ENCODE measurements at regions of chr2 and their contacts with region 1.

Region 1: DNA sequence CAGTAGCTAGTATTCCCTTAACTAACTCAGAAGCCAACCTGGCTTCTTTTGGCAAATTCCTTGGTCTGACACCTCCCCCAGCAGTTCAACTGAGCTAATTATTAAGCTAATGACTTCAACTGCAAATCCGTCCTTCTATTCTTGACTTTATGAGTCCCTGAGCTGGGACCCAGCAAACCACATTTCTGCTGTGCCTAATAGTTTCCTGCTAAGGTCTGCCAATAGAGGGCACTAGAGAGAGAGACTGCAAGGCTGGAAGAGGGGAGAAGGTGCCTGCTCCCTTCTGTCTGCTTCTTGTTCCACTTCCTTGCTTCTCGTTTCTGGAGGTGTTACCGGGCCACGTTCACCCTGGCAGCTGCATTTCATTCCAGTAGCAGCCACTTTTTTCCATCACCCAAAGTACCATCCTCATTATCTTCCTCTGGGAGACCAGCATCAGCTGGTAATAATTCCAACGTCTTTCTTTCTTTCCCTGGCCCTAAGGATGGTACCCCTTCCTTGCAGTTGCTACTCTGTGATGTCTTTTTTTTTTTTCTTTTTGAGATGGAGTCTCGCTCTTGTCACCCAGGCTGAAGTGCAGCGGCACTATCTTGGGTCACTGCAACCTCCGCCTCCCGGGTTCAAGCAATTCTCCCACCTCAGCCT is 352.0 kb downstream of the TNS1 start:
- DNase-seq: peak in 3 of 5 donors; percentile 33 to 43 (median 34)
- ATAC-seq: peak in 2 of 4 donors; percentile 73 to 84
- H3K4me3 ChIP-seq: no peak overlapping the region
- H3K27ac ChIP-seq: no peak overlapping the region
- H3K4me1 ChIP-seq: peaks cover 0 to 16% (median 0%) of the 10 kb centered on the region in 12 donors
- H3K27me3 ChIP-seq: no peaks in the 10 kb centered on the region
- CTCF ChIP-seq: peak; percentile 62 to 84 (median 72)
- POLR2A ChIP-seq: no peak

Region 2: GRCh38 chr2:217538719-217539118 is 112.1 kb before region 1 on chr2:
- intact Hi-C with region 1: loop called in 1 of 10 experiments (anchors 10 kb)
- DNase-seq: no peak
- ATAC-seq: no peak
- H3K4me3 ChIP-seq: no peak overlapping the region
- H3K27ac ChIP-seq: no peak overlapping the region
- H3K4me1 ChIP-seq: peaks cover 0 to 17% (median 0%) of the 10 kb centered on the region in 12 donors
- H3K27me3 ChIP-seq: no peaks in the 10 kb centered on the region
- CTCF ChIP-seq: no peak
- POLR2A ChIP-seq: no peak

Region 3: GRCh38 chr2:217695033-217695520 is 44.2 kb after region 1 on chr2:
- intact Hi-C with region 1: loop called in 1 of 10 experiments (anchors 2 kb)
- DNase-seq: no peak
- ATAC-seq: peak in 3 of 4 donors; percentile 29 to 76 (median 41)
- H3K4me3 ChIP-seq: no peak overlapping the region
- H3K27ac ChIP-seq: peak overlapping the region in 6 of 12 donors; percentile 9 to 63 (median 30)
- H3K4me1 ChIP-seq: peaks cover 0 to 20% (median 0%) of the 10 kb centered on the region in 12 donors
- H3K27me3 ChIP-seq: no peaks in the 10 kb centered on the region
- CTCF ChIP-seq: no peak
- POLR2A ChIP-seq: no peak

Region 4: DNA sequence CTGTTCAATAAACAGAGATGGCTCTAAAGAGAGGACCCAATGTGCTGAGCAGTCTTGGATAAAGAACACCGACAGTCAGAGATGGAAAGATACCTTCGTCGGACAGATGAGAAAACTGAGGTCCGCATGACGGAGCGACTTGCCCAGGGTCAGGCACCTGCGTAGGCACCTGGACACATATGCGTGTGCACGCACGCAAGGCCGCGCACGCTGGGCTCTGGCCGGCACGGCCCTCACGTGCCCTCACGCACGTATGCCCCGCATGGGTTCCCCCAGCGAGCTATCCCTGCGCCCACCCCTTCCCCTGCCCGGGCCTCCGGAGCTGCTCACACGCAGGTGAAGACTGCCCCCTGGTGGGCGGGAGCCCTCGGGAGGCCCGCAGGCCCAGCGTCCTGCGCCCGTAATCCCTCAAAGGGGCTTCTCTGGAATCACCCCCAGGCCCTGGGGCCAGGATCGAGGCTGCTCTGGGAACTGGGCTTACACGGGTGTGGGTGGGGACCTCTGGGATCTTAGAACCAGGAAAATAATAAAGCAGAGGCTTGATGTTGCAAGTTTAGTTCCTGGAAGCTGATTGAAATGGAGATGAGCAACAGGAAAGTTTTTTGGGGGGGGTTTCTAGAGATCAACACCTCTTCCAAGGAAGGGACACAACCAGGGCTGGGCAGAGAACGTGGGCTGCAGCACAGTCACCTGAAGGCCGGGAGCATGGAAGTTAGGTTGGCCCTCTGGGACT is 105.7 kb after region 1 on chr2:
- intact Hi-C with region 1: loop called in 8 of 10 experiments (anchors 5 to 10 kb)
- DNase-seq: peak; percentile 65 to 84 (median 74)
- ATAC-seq: peak; percentile 76 to 91 (median 86)
- H3K4me3 ChIP-seq: peak overlapping the region in 8 of 12 donors; percentile 11 to 39 (median 31)
- H3K27ac ChIP-seq: peak overlapping the region in 1 of 12 donors; percentile 26
- H3K4me1 ChIP-seq: peaks cover 0 to 24% (median 7%) of the 10 kb centered on the region in 12 donors
- H3K27me3 ChIP-seq: peaks cover 0 to 6% (median 0%) of the 10 kb centered on the region in 9 donors
- CTCF ChIP-seq: peak; percentile 87 to 98 (median 94)
- POLR2A ChIP-seq: no peak